Heart left ventricle (tissue), 16 donors: ENCODE measurements at regions of chr22 and their contacts with region 1.

Region 1: DNA sequence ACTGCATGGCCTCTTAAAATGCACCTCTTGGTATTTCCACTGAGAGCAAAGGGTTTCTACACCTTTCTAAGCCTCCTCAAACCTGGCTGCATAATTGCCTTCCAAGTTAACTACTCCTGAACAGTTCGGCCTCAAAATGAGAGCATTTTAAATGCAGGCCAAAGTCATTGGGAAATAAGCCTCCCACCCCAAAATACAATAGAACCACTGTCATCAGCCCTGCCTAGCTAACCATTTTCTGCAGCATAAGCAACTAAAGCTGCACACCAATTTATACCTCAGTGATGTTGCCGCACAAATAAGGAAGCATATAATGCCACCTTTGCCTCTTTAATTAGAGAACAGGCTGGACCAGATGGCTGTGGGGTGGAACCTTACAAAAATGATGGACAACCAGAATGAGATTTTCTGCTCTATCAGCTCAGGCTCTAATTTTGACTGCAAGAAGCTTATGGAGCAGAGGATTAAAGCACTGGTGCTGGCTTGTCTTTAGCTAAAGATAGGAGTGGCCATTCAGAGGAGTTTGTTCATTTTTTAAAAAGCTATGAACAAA is 4.3 kb downstream of the TOB2 start:
- DNase-seq: no peak
- ATAC-seq: no peak
- H3K4me3 ChIP-seq: peak overlapping the region in 1 of 12 donors; percentile 15
- H3K27ac ChIP-seq: peak overlapping the region in 5 of 12 donors; percentile 13 to 100 (median 100)
- H3K4me1 ChIP-seq: peaks cover 6 to 65% (median 49%) of the 10 kb centered on the region in 12 donors
- H3K27me3 ChIP-seq: no peaks in the 10 kb centered on the region
- CTCF ChIP-seq: no peak
- POLR2A ChIP-seq: no peak

Region 2: DNA sequence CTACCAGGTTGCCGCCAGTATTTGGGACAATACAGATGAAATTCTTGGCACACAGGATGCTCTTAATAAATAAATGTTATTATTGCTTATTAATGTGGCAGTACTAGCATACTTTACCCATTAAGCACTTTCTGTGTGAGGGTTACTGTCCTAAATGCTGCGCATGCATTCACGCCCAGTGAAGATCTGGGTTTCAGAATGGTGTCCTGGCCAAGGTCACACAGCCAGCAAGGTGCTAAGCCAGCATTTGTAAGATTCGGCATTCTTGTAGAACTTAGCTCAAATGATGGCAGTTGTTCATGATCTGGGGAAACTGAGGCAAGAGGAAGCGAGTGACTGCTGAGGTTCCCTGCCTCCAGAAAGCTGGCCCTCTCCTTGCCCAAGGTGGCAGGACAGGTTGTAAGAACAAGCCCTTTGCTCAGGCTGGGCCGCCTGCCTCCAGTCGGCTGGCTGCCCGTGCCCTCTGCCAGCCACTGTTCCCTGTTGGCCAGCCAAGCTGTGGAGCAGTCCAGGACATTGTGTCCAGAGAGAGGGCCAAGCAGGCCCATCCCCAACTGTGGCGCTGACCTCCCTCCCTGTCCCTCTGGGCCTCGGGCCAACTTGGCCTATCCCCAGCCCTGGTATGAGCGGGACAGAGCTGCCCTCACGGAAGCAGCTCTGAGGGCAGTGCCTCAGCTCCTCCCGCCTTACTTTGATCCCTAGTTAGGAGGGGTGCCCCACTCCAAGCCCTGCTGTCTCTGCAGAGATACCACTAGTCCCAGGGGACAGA is 24.5 kb before region 1 on chr22:
- intact Hi-C with region 1: loop called in 1 of 10 experiments (anchors 2 kb)
- DNase-seq: peak; percentile 89 to 97 (median 93)
- ATAC-seq: peak; percentile 73 to 88 (median 87)
- H3K4me3 ChIP-seq: peak overlapping the region in 1 of 12 donors; percentile 13
- H3K27ac ChIP-seq: peak overlapping the region; percentile 45 to 99 (median 92)
- H3K4me1 ChIP-seq: peaks cover 2 to 57% (median 34%) of the 10 kb centered on the region in 12 donors
- H3K27me3 ChIP-seq: no peaks in the 10 kb centered on the region
- CTCF ChIP-seq: no peak
- POLR2A ChIP-seq: peak in 1 of 2 donors; percentile 42